Esophagus squamous epithelium (tissue), 5 donors: ENCODE measurements at regions of chr1 and their contacts with region 1.

Region 1: GRCh38 chr1:54810100-54810942 is 9.2 kb upstream of the TTC22 start:
- DNase-seq: no peak
- H3K4me3 ChIP-seq: no peak overlapping the region
- H3K27ac ChIP-seq: no peak overlapping the region
- H3K4me1 ChIP-seq: peaks cover 0 to 38% (median 0%) of the 10 kb centered on the region in 3 donors
- H3K27me3 ChIP-seq: no peaks in the 10 kb centered on the region
- CTCF ChIP-seq: peak; percentile 52 to 90 (median 77)
- POLR2A ChIP-seq: no peak

Region 2: GRCh38 chr1:54081306-54082270 is 728.7 kb before region 1 on chr1:
- intact Hi-C with region 1: no loop called
- DNase-seq: no peak
- H3K4me3 ChIP-seq: no peak overlapping the region
- H3K27ac ChIP-seq: no peak overlapping the region
- H3K4me1 ChIP-seq: peaks cover 0 to 7% (median 3%) of the 10 kb centered on the region in 3 donors
- H3K27me3 ChIP-seq: no peaks in the 10 kb centered on the region
- CTCF ChIP-seq: peak; percentile 49 to 84 (median 73)
- POLR2A ChIP-seq: no peak

Region 3: GRCh38 chr1:54671985-54672608 is 138.2 kb before region 1 on chr1:
- intact Hi-C with region 1: loop called (anchors 10 kb)
- DNase-seq: no peak
- H3K4me3 ChIP-seq: no peak overlapping the region
- H3K27ac ChIP-seq: no peak overlapping the region
- H3K4me1 ChIP-seq: no peaks in the 10 kb centered on the region
- H3K27me3 ChIP-seq: no peaks in the 10 kb centered on the region
- CTCF ChIP-seq: peak; percentile 51 to 92 (median 78)
- POLR2A ChIP-seq: no peak

Region 4: GRCh38 chr1:54944610-54945544 is 134.6 kb after region 1 on chr1:
- intact Hi-C with region 1: no loop called
- DNase-seq: no peak
- H3K4me3 ChIP-seq: peak overlapping the region in 1 of 4 donors; percentile 32
- H3K27ac ChIP-seq: peak overlapping the region; percentile 56 to 84 (median 74)
- H3K4me1 ChIP-seq: peaks cover 0 to 28% (median 9%) of the 10 kb centered on the region in 3 donors
- H3K27me3 ChIP-seq: no peaks in the 10 kb centered on the region
- CTCF ChIP-seq: peak; percentile 57 to 85 (median 79)
- POLR2A ChIP-seq: no peak